ENCODE measurements at regions of chrX and their contacts with region 1.

Region 1: DNA sequence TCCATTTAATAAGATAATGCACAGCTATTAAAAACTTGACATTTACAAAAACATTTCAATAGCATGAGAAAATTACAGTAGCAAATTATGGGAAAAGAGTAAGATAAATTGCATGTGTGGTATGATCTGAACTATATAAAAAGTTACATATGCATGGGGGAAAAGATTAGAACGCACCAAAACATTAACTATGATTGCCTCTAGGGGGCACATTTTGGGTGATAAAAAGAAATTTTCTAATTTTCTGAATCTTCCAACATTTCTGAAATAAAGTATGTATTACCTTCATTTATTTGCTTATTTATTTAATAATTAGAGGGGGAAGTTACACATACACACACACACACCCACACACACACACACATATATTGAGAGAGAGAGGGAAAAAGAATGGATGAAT is 19.6 kb upstream of the KDM5C start:
- DNase-seq: no peak
- H3K4me3 Mint-ChIP-seq: no peak overlapping the region
- H3K27ac Mint-ChIP-seq: no peak overlapping the region
- H3K4me1 Mint-ChIP-seq: no peaks in the 10 kb centered on the region
- H3K27me3 Mint-ChIP-seq: peaks cover 21% of the 10 kb centered on the region
- CTCF ChIP-seq: peak; percentile 33

Region 2: GRCh38 chrX:53330331-53330730 is 85.7 kb after region 1 on chrX:
- CTCF ChIA-PET with region 1: interaction called, 3 read pairs
- POLR2A ChIA-PET with region 1: no interaction called
- intact Hi-C with region 1: loop called (anchors 1 kb)
- DNase-seq: no peak
- H3K4me3 Mint-ChIP-seq: no peak overlapping the region
- H3K27ac Mint-ChIP-seq: no peak overlapping the region
- H3K4me1 Mint-ChIP-seq: no peaks in the 10 kb centered on the region
- H3K27me3 Mint-ChIP-seq: peaks cover 98% of the 10 kb centered on the region
- CTCF ChIP-seq: no peak

Region 3: GRCh38 chrX:53433651-53434639 is 189.3 kb after region 1 on chrX and contains the start of gene HSD17B10:
- CTCF ChIA-PET with region 1: interaction called, 3 read pairs
- POLR2A ChIA-PET with region 1: no interaction called
- intact Hi-C with region 1: loop called (anchors 5 kb)
- DNase-seq: peak; percentile 79
- H3K4me3 Mint-ChIP-seq: peak within 1 kb of the TSS; percentile 82
- H3K27ac Mint-ChIP-seq: peak within 1 kb of the TSS; percentile 79
- H3K4me1 Mint-ChIP-seq: peaks cover 16% of the 10 kb centered on the region
- H3K27me3 Mint-ChIP-seq: peaks cover 47% of the 10 kb centered on the region
- CTCF ChIP-seq: no peak
- total RNA-seq, gene HSD17B10: 113 and 115 TPM in 2 replicates

Measured in MCF 10A (cell line).